RWPE1 (cell line): ENCODE measurements at regions of chr17 and their contacts with region 1.

Region 1: DNA sequence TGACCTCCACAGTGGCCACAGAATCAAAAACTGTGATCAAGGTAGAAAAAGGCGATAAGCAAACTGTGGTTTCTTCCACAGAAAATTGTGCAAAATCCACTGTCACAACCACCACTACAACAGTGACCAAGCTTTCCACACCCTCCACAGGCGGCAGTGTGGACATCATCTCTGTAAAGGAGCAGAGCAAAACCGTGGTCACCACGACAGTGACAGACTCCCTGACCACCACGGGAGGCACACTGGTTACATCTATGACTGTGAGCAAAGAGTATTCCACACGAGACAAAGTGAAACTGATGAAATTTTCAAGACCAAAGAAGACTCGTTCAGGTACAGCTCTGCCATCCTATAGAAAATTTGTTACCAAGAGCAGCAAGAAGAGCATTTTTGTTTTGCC is 83.6 kb downstream of the C17orf58 start:
- DNase-seq: no peak
- H3K27ac ChIP-seq: no peak overlapping the region
- CTCF ChIP-seq: no peak

Region 2: DNA sequence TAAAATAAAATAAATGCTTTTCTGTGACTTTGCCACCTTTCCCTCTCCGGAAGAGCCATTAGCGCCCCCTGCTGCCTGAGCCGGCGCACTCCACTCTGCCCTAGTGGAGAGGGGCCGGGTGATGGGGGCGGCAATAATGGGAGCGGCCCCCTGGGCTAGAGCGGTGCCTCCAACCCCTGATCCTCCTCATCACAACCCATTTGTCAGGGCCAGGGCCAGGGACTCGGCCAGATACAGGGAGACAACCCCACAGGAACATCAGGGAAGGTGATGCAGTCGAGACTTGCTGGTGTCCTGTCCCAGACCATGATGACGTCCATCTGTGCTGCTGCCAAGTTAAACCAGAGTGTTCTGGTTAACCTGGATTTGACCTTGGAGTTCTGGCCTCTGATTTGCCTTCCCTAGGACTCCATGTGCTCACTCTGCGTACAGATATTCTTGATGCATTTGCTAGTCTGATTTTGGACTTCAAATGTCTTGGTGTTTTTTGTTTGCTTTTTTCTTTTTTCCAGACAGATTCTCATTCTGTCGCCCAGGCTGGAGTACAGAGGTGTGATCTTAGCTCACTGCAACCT is 133.5 kb before region 1 on chr17:
- CTCF ChIA-PET with region 1: no interaction called
- POLR2A ChIA-PET with region 1: interaction called, 10 read pairs
- DNase-seq: peak; percentile 36
- H3K27ac ChIP-seq: no peak overlapping the region
- CTCF ChIP-seq: peak; percentile 71

Region 3: DNA sequence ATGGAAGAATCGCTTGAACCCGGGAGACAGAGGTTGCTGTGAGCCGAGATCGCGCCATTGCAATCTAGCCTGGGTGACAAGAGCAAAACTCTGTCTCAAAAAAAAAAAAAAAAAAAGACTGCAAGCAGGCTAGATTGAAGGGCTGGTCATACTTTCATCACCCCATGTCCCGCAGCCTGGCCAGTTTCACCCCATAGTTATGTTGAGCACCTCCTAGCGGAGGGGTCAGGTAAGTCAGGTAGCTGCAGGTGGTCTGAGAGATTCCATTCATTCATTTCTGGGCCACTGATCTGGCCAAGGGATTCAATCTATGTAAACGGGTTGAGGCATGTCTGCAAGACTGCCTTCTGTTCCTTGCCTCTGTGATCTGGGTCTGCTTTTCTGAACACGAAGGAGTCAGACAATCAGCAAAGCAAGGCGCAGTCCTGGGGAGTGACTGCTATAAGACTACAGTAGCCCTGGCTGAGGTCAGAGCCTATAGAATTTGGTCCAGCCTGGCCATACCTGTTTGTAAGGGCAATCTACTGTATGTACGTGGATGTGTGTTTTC is 111.0 kb before region 1 on chr17:
- CTCF ChIA-PET with region 1: no interaction called
- POLR2A ChIA-PET with region 1: no interaction called
- DNase-seq: no peak
- H3K27ac ChIP-seq: no peak overlapping the region
- CTCF ChIP-seq: no peak; the same call in 1 of the 2 replicates

Region 4: DNA sequence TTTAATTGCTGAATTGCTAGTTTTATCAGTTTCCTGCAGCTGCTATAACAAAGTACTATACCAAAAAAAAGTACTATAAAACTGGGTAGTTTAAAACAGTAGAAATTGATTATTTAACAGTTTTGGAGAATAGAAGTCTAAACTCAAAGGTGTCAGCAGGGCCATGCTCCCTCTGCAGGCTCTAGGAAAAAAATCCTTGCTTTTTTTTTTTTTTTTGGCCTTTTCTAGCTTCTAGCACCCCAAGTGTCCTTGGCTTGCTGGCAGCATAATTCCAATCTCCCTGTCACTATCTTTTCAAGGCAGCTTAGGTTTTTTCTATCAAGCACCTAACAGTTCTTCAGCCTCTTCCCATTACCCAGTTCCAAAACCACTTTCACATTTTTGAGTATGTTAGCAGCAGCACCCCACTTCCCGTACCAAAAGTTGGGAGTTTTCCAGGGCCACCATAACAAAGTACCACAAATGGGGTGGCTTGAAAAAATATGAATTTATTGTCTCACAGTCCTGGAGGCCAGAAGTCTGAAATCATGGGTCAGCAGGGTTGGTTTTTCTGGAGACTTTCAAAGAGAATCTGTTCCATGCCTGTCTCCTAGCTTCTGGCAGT is 49.9 kb before region 1 on chr17:
- CTCF ChIA-PET with region 1: no interaction called
- POLR2A ChIA-PET with region 1: no interaction called
- DNase-seq: no peak
- H3K27ac ChIP-seq: no peak overlapping the region
- CTCF ChIP-seq: no peak

Region 5: GRCh38 chr17:67879662-67880061 is 33.0 kb before region 1 on chr17:
- CTCF ChIA-PET with region 1: no interaction called
- POLR2A ChIA-PET with region 1: no interaction called
- DNase-seq: no peak
- H3K27ac ChIP-seq: no peak overlapping the region
- CTCF ChIP-seq: no peak

Region 6: DNA sequence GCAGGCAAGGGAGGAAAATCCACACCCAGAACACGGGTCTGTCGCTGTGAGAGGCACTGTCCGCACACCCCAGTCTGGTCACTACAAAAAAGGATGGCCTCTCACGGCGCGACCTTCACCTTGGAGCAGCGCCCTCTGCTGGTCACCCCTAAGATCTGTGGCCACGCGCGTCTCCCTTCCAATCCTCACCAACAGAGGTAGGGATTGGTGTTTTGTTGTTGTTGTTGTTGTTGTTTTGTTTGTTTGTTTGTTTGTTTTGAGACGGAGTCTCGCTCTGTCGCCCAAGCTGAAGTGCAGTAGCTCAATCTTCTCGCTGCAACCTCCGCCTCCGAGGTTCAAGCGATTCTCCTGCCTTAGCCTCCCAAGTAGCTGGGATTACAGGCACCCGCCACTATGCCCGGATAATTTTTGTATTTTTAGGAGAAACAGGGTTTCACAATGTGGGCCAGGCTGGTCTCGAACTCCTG is 98.6 kb after region 1 on chr17:
- CTCF ChIA-PET with region 1: no interaction called
- POLR2A ChIA-PET with region 1: no interaction called
- DNase-seq: peak; percentile 28
- H3K27ac ChIP-seq: no peak overlapping the region
- CTCF ChIP-seq: peak; percentile 89